HEK293T (cell line): ENCODE measurements at regions of chr6 and their contacts with region 1.

Region 1: GRCh38 chr6:158686791-158687381 is 37.0 kb downstream of the SYTL3 start:
- DNase-seq: no peak

Region 2: DNA sequence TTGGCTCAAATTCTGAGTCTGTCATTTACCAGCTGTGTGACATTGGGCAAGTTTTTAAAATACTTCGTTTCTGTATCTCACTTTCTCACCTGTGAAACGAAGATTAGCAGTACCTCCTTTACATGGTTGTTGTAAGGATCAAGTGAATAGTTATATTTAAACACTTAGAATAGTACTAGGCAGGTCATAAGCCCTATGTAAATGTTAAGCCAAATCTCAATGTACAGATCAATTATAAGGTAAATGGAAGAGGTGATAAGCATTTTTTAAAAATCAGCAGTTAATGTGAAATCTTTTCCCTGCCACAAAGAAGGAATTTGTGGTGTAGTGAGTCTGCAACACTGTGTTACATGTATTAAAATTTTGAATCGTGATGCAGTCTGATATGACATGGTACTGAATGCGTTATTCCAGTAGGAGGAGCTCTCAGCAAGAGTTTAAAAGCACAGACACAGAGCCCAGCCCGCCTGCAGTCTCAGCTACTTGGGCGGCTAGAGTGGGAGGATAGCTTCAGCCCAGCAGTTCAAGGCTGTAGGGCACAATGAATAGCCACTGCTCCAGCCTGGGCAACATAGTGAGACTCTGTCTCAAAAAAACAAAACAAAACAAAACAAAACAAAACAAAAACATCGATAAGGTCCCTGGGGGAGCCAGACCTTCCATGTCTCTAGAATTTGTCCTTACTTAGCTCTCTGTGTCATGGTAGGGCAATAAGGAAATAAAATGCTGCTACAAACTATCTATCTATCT is 472.8 kb before region 1 on chr6:
- CTCF ChIA-PET with region 1: interaction called, 19 read pairs
- POLR2A ChIA-PET with region 1: no interaction called
- DNase-seq: peak; percentile 74

Region 3: GRCh38 chr6:158660333-158660754 is 26.5 kb before region 1 on chr6:
- CTCF ChIA-PET with region 1: interaction called, 21 read pairs
- POLR2A ChIA-PET with region 1: no interaction called
- DNase-seq: peak; percentile 67

Region 4: GRCh38 chr6:158704181-158704822 is 17.4 kb after region 1 on chr6:
- CTCF ChIA-PET with region 1: interaction called, 10 read pairs
- POLR2A ChIA-PET with region 1: no interaction called
- DNase-seq: peak; percentile 95

Region 5: GRCh38 chr6:158826801-158827573 is 140.1 kb after region 1 on chr6:
- CTCF ChIA-PET with region 1: no interaction called
- POLR2A ChIA-PET with region 1: no interaction called
- DNase-seq: no peak